ENCODE measurements at regions of chr11 and their contacts with region 1.

Region 1: DNA sequence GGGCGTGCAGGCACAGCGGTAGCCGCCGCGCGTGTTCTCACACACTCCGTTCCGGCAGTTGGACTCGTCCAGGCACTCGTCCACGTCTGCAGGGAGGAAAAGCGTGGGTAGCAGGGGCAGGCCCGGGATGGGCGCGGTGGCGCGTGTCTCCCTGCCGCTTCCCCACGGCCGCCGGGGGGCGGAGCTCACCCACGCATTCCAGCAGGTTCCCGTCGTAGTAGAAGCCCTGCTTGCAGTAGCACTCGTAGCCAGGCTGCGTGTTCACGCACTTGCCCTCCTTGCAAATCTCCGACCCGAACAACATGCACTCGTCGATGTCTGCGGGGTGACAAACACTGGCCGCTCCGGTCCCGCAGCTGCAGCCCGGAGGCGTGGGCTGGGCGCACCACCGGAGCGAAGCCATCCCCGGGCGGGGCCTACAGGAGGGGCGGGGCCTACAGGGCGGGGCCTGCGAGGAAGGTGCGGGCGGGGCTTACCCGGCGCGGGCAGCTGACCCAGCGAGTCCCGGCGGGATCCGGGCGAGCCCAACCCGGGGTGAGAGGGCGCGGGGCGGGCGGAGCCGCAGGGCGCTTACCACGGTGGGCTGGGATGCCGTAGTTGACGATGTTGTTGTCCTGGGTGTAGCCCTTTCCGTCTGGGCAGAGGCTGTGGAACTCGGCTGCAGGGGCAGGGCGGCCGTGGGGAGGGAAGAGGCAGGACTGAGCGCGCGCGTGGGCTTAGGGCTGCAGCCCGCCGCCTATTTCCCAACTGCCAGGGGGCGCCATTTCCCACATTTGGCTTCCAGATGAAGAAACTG is 15.6 kb downstream of the SCYL1 start:
- H3K4me3 ChIP-seq: peak overlapping the region; percentile 47
- H3K27ac ChIP-seq: peak overlapping the region; percentile 69; the same call in 1 of the 2 replicates
- H3K4me1 ChIP-seq: peaks cover 3% of the 10 kb centered on the region; the same call in 1 of the 2 replicates
- CTCF ChIP-seq: peak; percentile 81

Region 2: DNA sequence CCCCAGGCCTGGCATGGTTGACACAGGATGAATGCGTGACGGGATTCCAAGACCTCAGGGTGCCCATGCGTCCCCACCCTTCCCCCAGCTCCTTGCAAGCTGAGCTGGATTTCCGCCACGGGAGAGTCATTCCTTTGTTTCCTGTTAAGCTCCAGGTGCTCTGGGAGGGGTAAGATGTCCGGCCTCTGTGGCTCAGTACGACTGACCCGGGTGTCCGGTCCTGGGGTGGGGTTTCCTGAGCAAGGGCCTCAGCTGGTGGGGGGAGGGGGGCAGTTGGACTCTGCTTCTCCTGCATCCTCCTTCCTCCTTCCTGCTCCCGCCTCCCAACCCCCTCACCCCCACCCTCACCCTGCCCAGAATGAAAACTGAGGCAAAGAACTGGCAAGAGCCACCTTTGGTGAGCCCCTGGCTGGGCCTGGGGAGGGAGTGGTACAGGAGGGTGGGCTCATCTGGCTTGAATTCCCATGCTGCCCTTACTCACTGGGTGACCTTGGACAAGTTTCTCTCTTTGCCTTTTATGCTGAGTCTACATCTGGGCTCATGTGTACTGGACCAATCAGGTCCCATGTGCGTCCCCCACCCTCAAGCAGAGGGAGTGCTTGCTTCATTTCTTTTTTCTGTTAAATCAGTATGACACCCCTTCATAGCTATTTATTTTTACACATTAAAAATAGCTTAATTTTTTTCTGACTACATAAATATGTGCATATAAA is 223.3 kb before region 1 on chr11:
- CTCF ChIA-PET with region 1: no interaction called
- POLR2A ChIA-PET with region 1: no interaction called
- H3K4me3 ChIP-seq: no peak overlapping the region
- H3K27ac ChIP-seq: no peak overlapping the region
- H3K4me1 ChIP-seq: no peaks in the 10 kb centered on the region
- CTCF ChIP-seq: no peak

Region 3: GRCh38 chr11:65524741-65525545 is 15.6 kb before region 1 on chr11 and contains the start of gene SCYL1:
- CTCF ChIA-PET with region 1: interaction called, 21 read pairs
- POLR2A ChIA-PET with region 1: interaction called, 12 read pairs
- H3K4me3 ChIP-seq: peak within 1 kb of the TSS; percentile 82
- H3K27ac ChIP-seq: peak within 1 kb of the TSS; percentile 81
- H3K4me1 ChIP-seq: peaks cover 4% of the 10 kb centered on the region; the same call in 1 of the 2 replicates
- CTCF ChIP-seq: no peak

Region 4: DNA sequence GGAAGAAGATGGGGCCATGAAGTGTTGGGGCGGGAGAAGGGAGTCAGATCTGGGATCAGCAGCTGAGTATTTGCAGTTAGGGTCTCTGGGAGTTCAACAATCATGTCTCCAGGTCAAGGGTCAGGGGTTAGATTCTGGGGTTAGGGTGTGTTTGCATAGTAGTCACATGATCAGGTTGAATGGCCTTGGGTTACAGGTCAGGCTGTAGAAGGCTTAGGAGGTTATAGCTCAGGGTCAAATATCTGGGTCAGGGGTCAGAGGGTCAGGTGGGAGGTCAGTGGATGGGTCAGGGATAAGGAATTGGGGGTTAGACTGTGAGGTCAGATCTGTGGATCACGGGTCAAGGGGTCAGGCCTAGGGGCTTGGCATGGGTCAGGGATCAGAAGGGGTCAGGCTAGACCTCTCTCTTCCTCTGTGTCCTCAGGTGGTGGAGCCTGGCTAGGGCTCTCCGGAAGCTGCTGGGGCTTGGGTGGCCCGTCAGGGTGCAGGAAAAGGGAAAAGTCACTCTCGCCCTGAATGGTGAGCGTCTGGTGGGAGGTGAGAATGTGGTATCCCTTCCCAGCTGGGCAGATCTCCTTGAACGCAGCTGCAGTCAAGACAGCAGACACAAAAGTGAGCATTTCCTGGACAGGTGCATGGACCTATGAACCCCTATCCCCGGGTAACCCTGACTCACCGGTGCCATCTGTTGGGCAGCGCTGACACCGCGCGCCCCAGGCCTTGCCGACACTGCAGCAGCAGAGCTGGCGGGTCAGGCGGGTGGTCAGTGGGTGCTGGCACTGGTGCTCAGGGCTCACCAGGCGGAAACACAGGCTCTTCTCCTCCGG is 11.3 kb after region 1 on chr11:
- CTCF ChIA-PET with region 1: interaction called, 53 read pairs
- POLR2A ChIA-PET with region 1: interaction called, 9 read pairs
- H3K4me3 ChIP-seq: no peak overlapping the region
- H3K27ac ChIP-seq: no peak overlapping the region
- H3K4me1 ChIP-seq: no peaks in the 10 kb centered on the region; the same call in 1 of the 2 replicates
- CTCF ChIP-seq: peak; percentile 48; the same call in 1 of the 2 replicates

Region 5: DNA sequence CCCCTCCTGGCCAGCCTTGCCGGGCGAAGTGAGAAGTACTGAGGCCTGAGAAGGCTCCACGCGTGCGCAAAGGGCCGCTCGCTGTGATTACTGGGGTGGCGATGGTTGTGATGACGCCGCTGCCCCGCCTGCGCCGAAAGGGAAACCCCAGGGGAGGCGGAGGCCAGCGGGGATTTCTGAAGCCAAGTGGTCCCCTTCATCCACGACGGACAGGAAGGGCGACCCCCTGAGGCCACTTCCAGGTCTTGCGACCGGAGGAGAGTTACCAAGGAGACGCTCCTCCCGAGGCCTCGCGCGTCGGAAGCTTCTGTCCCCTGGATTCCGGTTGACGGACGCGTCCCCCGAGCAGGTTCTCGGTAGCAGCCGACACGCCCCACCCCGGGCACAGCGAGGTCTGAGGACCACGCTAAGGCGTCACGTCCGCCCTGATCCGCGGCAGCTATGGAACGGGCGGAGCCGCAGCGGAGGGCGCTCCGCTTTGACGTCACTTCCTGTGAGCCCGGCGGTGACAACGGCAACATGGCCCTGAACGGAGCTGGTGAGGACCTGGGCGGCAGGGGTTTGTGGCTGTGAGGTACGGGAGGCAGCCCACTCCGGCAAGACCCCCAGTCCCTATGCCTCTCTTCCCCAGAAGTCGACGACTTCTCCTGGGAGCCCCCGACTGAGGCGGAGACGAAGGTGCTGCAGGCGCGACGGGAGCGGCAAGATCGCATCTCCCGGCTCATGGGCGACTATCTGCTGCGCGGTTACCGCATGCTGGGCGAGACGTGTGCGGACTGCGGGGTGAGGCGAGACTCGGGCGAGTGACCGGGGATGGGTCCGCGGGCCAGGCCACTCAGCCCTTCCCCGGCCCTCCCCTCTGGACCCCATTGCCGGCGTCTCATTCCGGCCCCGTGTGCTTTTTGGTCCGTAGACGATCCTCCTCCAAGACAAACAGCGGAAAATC is 29.8 kb after region 1 on chr11 and contains the start of gene ZNRD2:
- CTCF ChIA-PET with region 1: interaction called, 133 read pairs
- POLR2A ChIA-PET with region 1: interaction called, 39 read pairs
- H3K4me3 ChIP-seq: peak within 1 kb of the TSS; percentile 74
- H3K27ac ChIP-seq: peak within 1 kb of the TSS; percentile 93
- H3K4me1 ChIP-seq: peaks cover 16% of the 10 kb centered on the region; the same call in 1 of the 2 replicates
- CTCF ChIP-seq: peak; percentile 92

Region 6: GRCh38 chr11:65593518-65594298 is 53.2 kb after region 1 on chr11:
- CTCF ChIA-PET with region 1: interaction called, 46 read pairs
- POLR2A ChIA-PET with region 1: interaction called, 12 read pairs
- H3K4me3 ChIP-seq: no peak overlapping the region
- H3K27ac ChIP-seq: no peak overlapping the region
- H3K4me1 ChIP-seq: no peaks in the 10 kb centered on the region
- CTCF ChIP-seq: peak; percentile 68

Region 7: GRCh38 chr11:65637794-65638317 is 97.4 kb after region 1 on chr11 and contains the start of gene SIPA1:
- CTCF ChIA-PET with region 1: interaction called, 5 read pairs
- POLR2A ChIA-PET with region 1: interaction called, 11 read pairs
- H3K4me3 ChIP-seq: peak within 1 kb of the TSS; percentile 69
- H3K27ac ChIP-seq: peak within 1 kb of the TSS; percentile 61; the same call in 1 of the 2 replicates
- H3K4me1 ChIP-seq: no peaks in the 10 kb centered on the region
- CTCF ChIP-seq: peak; percentile 9; the same call in 1 of the 2 replicates